PC-9 (cell line): ENCODE measurements at regions of chr4 and their contacts with region 1.

Region 1: GRCh38 chr4:69749771-69750170 is 10.6 kb downstream of the SULT1B1 start:
- DNase-seq: peak in 1 of 2 experiments; percentile 37
- H3K4me3 ChIP-seq: no peak overlapping the region
- H3K27ac ChIP-seq: no peak overlapping the region
- H3K4me1 ChIP-seq: no peaks in the 10 kb centered on the region
- H3K27me3 ChIP-seq: no peaks in the 10 kb centered on the region
- CTCF ChIP-seq: no peak

Region 2: GRCh38 chr4:68780232-68780631 is 969.5 kb before region 1 on chr4:
- CTCF ChIA-PET with region 1: no interaction called
- POLR2A ChIA-PET with region 1: no interaction called
- intact Hi-C with region 1: no loop called
- DNase-seq: no peak
- H3K4me3 ChIP-seq: no peak overlapping the region
- H3K27ac ChIP-seq: no peak overlapping the region
- H3K4me1 ChIP-seq: no peaks in the 10 kb centered on the region
- H3K27me3 ChIP-seq: no peaks in the 10 kb centered on the region
- CTCF ChIP-seq: no peak

Region 3: DNA sequence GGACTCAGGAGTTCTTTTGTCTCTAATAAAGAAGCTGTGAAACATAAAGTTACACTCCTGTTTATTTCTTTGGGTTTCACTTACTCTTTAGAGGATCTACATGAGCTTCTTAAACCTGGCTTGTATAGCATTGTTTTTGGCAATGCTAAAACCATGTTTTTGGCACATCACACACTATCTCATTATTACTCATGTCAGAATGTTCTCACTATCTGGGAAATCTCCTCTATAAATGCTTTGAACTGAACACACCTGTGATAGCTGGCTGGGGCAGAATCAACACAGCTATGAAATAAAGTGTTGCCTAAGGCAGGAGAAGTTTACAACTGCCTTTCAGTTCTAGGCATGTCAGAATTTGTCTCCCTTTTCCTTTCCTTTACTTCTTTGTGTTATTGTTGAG is 42.0 kb before region 1 on chr4:
- CTCF ChIA-PET with region 1: no interaction called
- POLR2A ChIA-PET with region 1: no interaction called
- intact Hi-C with region 1: loop called (anchors 5 kb)
- DNase-seq: peak; percentile 1 to 37
- H3K4me3 ChIP-seq: no peak overlapping the region
- H3K27ac ChIP-seq: no peak overlapping the region
- H3K4me1 ChIP-seq: no peaks in the 10 kb centered on the region
- H3K27me3 ChIP-seq: no peaks in the 10 kb centered on the region
- CTCF ChIP-seq: no peak

Region 4: GRCh38 chr4:69858690-69859089 is 108.9 kb after region 1 on chr4:
- CTCF ChIA-PET with region 1: no interaction called
- POLR2A ChIA-PET with region 1: no interaction called
- intact Hi-C with region 1: no loop called
- DNase-seq: no peak
- H3K4me3 ChIP-seq: no peak overlapping the region
- H3K27ac ChIP-seq: no peak overlapping the region
- H3K4me1 ChIP-seq: no peaks in the 10 kb centered on the region
- H3K27me3 ChIP-seq: no peaks in the 10 kb centered on the region
- CTCF ChIP-seq: no peak